ENCODE measurements at regions of chr1 and their contacts with region 1.

Region 1: DNA sequence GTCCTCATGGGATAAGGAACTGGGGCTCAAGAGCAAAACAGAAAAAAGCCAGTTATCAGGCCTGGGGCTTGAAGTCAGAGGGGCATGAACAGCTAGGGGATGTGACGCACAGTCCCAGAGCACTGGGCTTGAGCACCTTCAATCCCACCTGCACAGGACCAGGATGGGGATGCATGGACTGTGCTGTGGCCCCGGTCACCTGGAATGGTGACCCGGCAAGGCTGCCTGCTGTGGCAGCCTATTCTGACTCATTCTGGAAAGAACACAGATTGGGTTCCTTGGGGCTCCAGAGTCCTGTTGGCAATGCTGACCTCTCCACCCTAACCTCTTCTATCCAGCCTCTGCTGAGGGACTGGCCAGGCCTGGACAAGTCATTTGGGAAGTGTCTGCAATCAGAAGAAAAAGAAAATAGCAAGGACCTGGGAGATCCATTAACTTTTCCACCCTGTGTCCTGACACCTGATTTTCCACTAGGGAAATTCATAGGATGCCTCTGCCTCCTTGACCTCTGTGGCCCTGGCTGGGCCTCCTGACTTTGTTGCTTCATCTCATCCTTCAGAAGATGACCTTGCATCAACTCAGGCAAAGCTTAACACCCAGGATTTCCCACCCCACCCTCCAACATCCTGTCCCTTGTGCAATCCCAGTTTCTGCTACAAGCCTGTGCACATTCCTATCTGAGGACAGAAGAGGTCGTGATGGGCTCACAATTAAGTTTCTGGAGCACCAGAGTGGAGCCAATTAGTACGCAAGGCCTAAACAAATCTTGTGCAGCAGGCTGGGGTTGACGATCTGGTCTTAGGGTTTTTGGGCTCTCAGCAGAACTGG is 17.9 kb upstream of the FMOD start:
- DNase-seq: peak; percentile 80 to 91 (median 87)
- H3K4me3 ChIP-seq: peak overlapping the region in 1 of 3 experiments; percentile 20
- H3K4me3 Mint-ChIP-seq: peak overlapping the region in 1 of 2 donors; percentile 69
- H3K27ac ChIP-seq: peak overlapping the region; percentile 62 to 78
- H3K27ac Mint-ChIP-seq: peak overlapping the region; percentile 85 to 98 (median 94)
- H3K4me1 ChIP-seq: peaks cover 23 to 26% of the 10 kb centered on the region in 2 donors
- H3K4me1 Mint-ChIP-seq: peaks cover 36% of the 10 kb centered on the region
- H3K27me3 ChIP-seq: no peaks in the 10 kb centered on the region
- H3K27me3 Mint-ChIP-seq: peaks cover 7 to 12% (median 11%) of the 10 kb centered on the region in 3 donors
- CTCF ChIP-seq: peak; percentile 33

Region 2: DNA sequence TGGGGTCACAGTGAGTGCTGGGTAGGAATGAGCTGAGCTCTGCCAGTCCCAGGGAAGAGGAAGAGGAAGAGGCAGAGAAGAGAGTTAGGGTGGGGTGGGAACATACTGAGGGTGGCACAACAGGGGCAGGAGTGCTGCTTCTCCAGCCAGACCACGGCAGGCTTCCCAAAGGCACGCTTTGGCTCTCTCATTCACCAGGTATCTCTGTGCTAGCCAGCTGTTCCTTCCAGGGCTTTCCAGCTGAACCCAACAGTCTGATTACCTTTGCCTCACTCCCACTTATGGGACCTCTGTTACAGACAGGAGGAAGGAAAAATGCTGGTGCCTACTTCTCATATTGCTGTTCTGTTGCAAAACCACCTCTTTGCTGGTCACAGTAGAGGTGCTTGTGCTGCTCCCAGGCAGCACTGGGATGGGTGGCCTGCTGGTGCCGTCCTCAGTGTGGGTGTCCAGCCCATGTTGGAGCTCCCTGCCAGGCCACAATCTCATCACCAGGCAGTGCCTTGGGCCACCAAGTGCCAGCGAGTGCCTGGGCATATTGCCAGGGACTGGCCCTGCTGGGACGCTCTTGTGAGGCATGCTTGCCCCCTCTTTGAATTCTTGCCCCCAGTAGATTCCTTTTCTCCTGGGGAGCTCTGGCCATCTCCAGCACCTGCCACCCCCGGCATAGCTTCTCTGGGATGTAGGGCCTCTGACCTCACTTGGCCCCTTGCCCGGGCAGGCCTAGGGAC is 239.2 kb before region 1 on chr1:
- intact Hi-C with region 1: no loop called
- DNase-seq: peak in 2 of 3 donors; percentile 21 to 34
- H3K4me3 ChIP-seq: no peak overlapping the region
- H3K4me3 Mint-ChIP-seq: peak overlapping the region in 1 of 2 donors; percentile 87
- H3K27ac ChIP-seq: no peak overlapping the region
- H3K27ac Mint-ChIP-seq: peak overlapping the region in 1 of 7 donors; percentile 62
- H3K4me1 ChIP-seq: peaks cover 64 to 66% of the 10 kb centered on the region in 2 donors
- H3K4me1 Mint-ChIP-seq: peaks cover 62% of the 10 kb centered on the region
- H3K27me3 ChIP-seq: peaks cover 26 to 52% of the 10 kb centered on the region in 2 donors
- H3K27me3 Mint-ChIP-seq: peaks cover 47 to 75% (median 69%) of the 10 kb centered on the region in 3 donors
- CTCF ChIP-seq: no peak

Region 3: GRCh38 chr1:203408486-203409427 is 39.9 kb after region 1 on chr1:
- intact Hi-C with region 1: loop called in 1 of 2 experiments (anchors 5 kb)
- DNase-seq: peak; percentile 74 to 92 (median 80)
- H3K4me3 ChIP-seq: no peak overlapping the region
- H3K4me3 Mint-ChIP-seq: no peak overlapping the region
- H3K27ac ChIP-seq: peak overlapping the region in 1 of 2 donors; percentile 69
- H3K27ac Mint-ChIP-seq: peak overlapping the region in 5 of 7 donors; percentile 49 to 90 (median 78)
- H3K4me1 ChIP-seq: peaks cover 40 to 43% of the 10 kb centered on the region in 2 donors
- H3K4me1 Mint-ChIP-seq: peaks cover 47% of the 10 kb centered on the region
- H3K27me3 ChIP-seq: no peaks in the 10 kb centered on the region
- H3K27me3 Mint-ChIP-seq: peaks cover 0 to 6% (median 3%) of the 10 kb centered on the region in 3 donors
- CTCF ChIP-seq: no peak

Region 4: DNA sequence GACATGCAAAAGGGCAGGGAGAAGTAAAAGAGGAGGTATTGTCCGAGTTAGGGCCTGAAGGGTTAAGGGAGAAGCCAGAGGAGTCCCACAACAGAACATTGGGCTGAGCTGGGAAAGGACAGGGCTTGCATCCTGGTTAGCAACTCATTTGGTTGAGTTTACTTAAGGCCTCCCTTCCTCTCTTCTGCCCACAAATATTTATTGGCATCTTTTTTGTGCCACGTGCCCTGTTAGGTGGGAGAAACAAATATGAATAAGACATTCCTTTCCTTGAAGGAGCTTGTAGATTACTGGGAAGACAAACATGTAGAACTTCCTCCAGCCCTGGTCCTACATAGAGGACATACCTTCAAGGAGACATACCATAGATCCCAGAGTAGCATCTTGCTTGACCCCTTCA is 53.8 kb after region 1 on chr1:
- intact Hi-C with region 1: no loop called
- DNase-seq: no peak
- H3K4me3 ChIP-seq: no peak overlapping the region
- H3K4me3 Mint-ChIP-seq: no peak overlapping the region
- H3K27ac ChIP-seq: no peak overlapping the region
- H3K27ac Mint-ChIP-seq: no peak overlapping the region
- H3K4me1 ChIP-seq: peaks cover 20 to 23% of the 10 kb centered on the region in 2 donors
- H3K4me1 Mint-ChIP-seq: peaks cover 23% of the 10 kb centered on the region
- H3K27me3 ChIP-seq: peaks cover 2 to 4% of the 10 kb centered on the region in 2 donors
- H3K27me3 Mint-ChIP-seq: peaks cover 11 to 22% (median 13%) of the 10 kb centered on the region in 3 donors
- CTCF ChIP-seq: no peak

Region 5: DNA sequence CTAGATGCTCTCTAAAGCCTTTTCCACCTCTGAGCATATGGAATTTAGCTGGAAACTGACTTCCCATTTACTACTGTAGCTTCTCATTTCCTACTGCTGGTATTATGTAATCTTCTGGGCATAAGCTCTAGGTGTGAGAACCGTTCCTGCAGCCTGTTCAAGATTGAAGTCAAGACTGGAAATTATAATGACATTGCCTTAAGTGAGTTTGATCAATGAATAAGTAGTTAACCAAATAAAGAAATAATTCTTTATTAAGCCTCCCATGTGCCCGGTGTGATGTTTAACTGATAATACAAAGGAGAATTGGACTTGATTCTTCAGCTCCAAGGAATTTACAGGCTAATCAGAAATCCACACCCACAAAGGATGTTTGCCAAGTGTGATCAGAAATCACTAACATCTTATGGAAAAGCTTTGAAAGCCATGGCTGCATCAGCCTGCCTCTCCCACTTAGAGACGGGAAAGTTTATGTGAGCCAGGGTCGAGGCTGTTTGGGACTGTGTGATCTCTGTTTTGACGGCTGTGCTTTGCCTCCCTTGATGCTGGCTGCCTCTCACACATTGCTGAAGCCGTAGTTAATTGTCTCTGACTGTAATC is 70.4 kb after region 1 on chr1:
- intact Hi-C with region 1: loop called in 1 of 2 experiments (anchors 10 kb)
- DNase-seq: peak in 2 of 3 donors; percentile 16 to 26
- H3K4me3 ChIP-seq: no peak overlapping the region
- H3K4me3 Mint-ChIP-seq: no peak overlapping the region
- H3K27ac ChIP-seq: no peak overlapping the region
- H3K27ac Mint-ChIP-seq: no peak overlapping the region
- H3K4me1 ChIP-seq: peaks cover 3 to 9% of the 10 kb centered on the region in 2 donors
- H3K4me1 Mint-ChIP-seq: peaks cover 16% of the 10 kb centered on the region
- H3K27me3 ChIP-seq: peaks cover 0 to 4% of the 10 kb centered on the region in 2 donors
- H3K27me3 Mint-ChIP-seq: peaks cover 15 to 24% (median 19%) of the 10 kb centered on the region in 3 donors
- CTCF ChIP-seq: no peak

Region 6: GRCh38 chr1:203486618-203487370 is 118.0 kb after region 1 on chr1:
- intact Hi-C with region 1: loop called in 1 of 2 experiments (anchors 2 kb)
- DNase-seq: no peak
- H3K4me3 ChIP-seq: no peak overlapping the region
- H3K4me3 Mint-ChIP-seq: no peak overlapping the region
- H3K27ac ChIP-seq: no peak overlapping the region
- H3K27ac Mint-ChIP-seq: peak overlapping the region in 4 of 7 donors; percentile 48 to 85 (median 59)
- H3K4me1 ChIP-seq: peaks cover 16 to 26% of the 10 kb centered on the region in 2 donors
- H3K4me1 Mint-ChIP-seq: peaks cover 24% of the 10 kb centered on the region
- H3K27me3 ChIP-seq: no peaks in the 10 kb centered on the region
- H3K27me3 Mint-ChIP-seq: peaks cover 0 to 11% (median 7%) of the 10 kb centered on the region in 3 donors
- CTCF ChIP-seq: no peak